ENCODE measurements at regions of chr13 and their contacts with region 1.

Region 1: GRCh38 chr13:35953537-35954206 is 177.5 kb downstream of the DCLK1 start:
- DNase-seq: peak; percentile 78
- ATAC-seq: peak; percentile 90

Region 2: DNA sequence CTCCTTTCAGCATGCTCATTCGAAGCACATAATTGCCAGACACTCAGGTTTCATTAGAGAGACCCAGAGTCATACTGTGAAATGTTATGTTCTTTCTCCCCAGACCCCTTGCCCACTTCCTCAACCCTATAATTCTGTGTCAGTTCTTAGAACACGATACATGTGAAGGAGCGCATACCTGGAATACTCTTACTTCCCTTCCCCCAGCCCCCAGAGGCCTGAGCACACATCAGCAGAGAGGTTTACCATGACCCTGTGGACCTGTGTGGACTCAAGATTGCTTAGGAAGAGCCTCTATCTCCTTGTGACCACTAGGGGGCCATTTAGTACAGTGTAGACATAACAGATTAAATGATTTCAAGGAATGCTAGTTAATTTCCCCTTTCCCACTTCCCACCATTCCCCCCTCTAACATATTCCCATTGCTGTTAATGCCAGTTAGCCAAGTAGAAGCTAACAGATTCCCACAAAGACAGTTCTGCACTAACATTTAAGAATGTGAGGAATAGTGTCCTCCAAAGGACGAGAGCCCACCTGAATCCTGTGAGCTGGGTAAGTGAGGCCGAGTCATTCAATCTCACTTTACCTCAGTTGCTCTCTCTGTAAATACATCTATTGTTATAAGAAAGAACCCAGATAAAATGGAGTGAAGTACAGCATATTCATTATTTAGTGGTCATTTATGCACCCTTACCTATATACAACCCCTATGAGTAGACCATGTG is 323.0 kb before region 1 on chr13:
- intact Hi-C with region 1: loop called (anchors 5 kb)
- DNase-seq: no peak
- ATAC-seq: peak; percentile 84

Region 3: GRCh38 chr13:35818633-35819067 is 135.0 kb before region 1 on chr13:
- intact Hi-C with region 1: loop called (anchors 10 kb)
- DNase-seq: no peak
- ATAC-seq: peak; percentile 59

Region 4: DNA sequence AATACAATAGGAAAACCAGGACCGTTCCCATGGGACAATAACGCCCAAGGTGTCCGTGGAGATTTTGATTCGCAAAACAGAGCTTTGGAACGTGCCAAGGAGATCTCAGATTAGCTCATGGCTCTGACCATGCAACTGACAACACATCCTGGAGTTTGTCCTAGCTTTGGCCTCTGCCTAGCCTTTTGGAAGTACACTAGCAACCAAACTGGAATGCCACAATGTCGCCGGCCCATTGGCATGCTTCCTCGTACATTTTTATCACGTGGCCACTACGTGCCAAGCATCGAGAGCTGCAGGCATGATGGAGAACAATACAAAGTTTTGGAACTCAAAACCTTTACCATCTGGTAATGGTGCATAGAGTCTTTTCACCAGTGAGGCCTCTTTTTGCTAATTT is 79.0 kb before region 1 on chr13:
- intact Hi-C with region 1: loop called (anchors 5 kb)
- DNase-seq: peak; percentile 73
- ATAC-seq: peak; percentile 82

Measured in Right ventricle myocardium inferior (tissue), 1 donor.